Pancreas (tissue), 10 donors: ENCODE measurements at regions of chr10 and their contacts with region 1.

Region 1: DNA sequence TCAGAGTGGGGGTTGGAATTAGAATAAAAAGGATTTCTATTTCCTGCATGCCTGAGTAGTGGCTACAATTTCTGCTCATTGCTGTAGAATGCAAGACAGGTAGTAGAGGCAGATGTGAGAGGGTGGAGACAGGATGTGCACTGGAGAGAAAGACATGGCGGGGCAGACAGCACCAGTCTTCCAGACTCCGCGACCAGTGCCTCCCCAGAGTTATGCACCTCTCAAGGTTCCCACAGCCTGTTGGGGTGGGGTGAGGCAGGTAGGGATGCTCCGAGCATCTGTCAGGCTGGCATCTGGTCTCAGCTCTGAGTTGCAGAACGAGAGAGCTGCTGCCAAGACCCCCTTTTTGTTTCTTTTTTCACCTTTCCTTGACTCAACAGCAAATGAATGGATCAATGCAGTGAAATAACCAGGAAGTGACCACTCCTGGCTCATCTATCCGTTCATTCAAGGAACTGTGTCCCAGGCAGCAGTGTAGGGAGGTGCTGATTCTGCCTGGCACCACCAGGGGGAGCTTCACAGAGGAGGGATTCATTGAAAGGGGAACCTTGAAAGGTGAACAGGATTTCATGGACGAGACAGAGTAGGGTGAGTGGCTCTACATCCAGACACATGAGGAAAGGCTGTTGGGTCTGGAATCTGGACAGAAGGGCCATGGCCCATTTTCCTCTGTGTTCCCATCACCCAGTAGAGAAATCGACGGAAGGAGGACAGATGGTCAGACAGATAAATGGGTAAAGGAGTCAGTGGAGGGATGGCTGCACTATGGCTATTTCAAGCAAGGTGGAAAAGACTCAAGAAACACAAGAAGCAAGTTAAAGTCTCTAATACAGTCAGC is 17.2 kb upstream of the SLC18A3 start:
- DNase-seq: peak; percentile 42 to 85 (median 67)
- ATAC-seq: peak; percentile 75 to 96 (median 91)
- H3K4me3 ChIP-seq: no peak overlapping the region
- H3K27ac ChIP-seq: no peak overlapping the region
- H3K4me1 ChIP-seq: no peaks in the 10 kb centered on the region
- H3K27me3 ChIP-seq: peaks cover 0 to 5% (median 0%) of the 10 kb centered on the region in 4 donors
- CTCF ChIP-seq: peak; percentile 79 to 93 (median 85)

Region 2: DNA sequence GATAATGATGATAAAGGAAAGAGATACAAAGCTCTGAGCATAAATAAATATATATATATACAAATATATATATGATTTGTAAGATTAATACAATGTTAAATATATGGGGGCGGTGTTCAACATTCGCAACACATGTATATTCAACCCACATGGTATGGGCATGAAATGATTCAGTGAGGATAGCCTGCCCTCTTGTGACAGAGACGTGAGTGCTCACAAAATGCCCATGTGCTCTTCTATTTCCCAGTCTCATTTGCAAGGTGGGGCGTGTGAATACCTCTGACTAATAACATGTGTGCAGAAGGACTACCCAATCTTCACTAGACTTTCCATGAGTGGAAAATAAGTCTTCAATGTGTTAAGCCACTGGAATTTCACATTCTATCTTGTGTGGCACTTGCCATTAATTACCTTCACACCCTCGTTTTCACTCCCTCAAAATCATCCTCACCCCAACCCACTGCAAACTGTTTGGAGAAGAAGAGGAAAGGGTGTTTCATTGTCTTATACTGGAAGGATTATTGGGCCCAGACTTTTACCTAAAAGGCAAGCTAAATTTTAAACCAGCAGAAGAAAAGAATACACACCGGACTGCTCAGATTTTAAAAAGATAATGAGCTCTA is 631.5 kb after region 1 on chr10:
- intact Hi-C with region 1: loop called in 1 of 3 experiments (anchors 10 kb)
- DNase-seq: peak in 3 of 6 donors; percentile 48 to 54 (median 53)
- ATAC-seq: peak; percentile 97 to 100 (median 98)
- H3K4me3 ChIP-seq: no peak overlapping the region
- H3K27ac ChIP-seq: no peak overlapping the region
- H3K4me1 ChIP-seq: peaks cover 0 to 4% (median 0%) of the 10 kb centered on the region in 3 donors
- H3K27me3 ChIP-seq: no peaks in the 10 kb centered on the region
- CTCF ChIP-seq: peak in 3 of 4 donors; percentile 14 to 21 (median 19)